G401 (cell line): ENCODE measurements at regions of chr17 and their contacts with region 1.

Region 1: GRCh38 chr17:41739661-41740352 is 5.4 kb upstream of the HAP1 start:
- DNase-seq: no peak

Region 2: GRCh38 chr17:41806685-41807445 is 67.1 kb after region 1 on chr17:
- in situ Hi-C with region 1: loop called (anchors 5 kb)
- DNase-seq: no peak